ENCODE measurements at regions of chr9 and their contacts with region 1.

Region 1: GRCh38 chr9:121059998-121060636 is 10.0 kb upstream of the C5 start:
- DNase-seq: peak; percentile 30
- H3K4me3 ChIP-seq: no peak overlapping the region
- H3K27ac ChIP-seq: no peak overlapping the region
- H3K4me1 ChIP-seq: no peaks in the 10 kb centered on the region
- H3K27me3 ChIP-seq: no peaks in the 10 kb centered on the region
- CTCF ChIP-seq: peak; percentile 65

Region 2: GRCh38 chr9:120985810-120986222 is 74.3 kb before region 1 on chr9:
- intact Hi-C with region 1: loop called (anchors 5 kb)
- DNase-seq: no peak
- H3K4me3 ChIP-seq: no peak overlapping the region
- H3K27ac ChIP-seq: no peak overlapping the region
- H3K4me1 ChIP-seq: no peaks in the 10 kb centered on the region
- H3K27me3 ChIP-seq: no peaks in the 10 kb centered on the region
- CTCF ChIP-seq: no peak

Measured in colonic mucosa (tissue), 4 donors.